Activated CD4-positive, alpha-beta T cell treated with anti-CD3 and anti-CD28 coated beads, Interleukin-2, amount 10 ng/mL, durations not matched to agents 7 days and 5 days (primary cell): ENCODE measurements at regions of chr3 and their contacts with region 1.

Region 1: DNA sequence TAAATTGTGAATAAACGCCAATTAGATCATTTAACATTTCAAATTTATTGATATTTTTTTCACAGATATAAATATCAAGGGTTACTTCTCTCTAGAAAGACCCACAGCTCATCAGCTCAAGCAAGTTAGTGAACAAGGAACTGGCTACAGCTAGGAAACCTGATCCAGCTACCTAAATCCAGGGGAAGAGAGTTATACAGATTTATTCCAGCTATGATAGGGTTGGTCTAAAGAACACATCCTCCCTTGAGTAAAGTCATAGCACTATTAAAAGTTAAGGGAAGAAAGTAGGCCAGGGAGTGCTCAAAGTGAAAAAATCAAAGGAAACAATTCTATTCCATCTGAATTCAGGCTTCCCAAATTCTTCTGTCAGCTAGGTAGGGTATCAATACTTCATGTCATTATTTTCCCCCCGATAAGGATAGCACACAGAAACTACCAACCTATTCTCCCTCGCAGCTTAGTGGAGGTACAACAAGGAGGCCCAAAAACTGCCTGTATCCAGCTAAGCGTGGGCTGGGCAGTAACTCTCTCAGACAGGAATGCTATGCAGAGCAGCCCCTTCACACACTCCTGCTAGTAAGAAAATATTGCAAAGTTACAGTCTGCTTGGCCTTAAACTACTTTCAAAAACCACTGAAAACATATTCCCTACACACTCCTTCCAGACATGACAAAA is 44.0 kb downstream of the DCUN1D1 start:
- DNase-seq: no peak
- H3K4me3 Mint-ChIP-seq: no peak overlapping the region
- H3K27ac Mint-ChIP-seq: no peak overlapping the region
- H3K4me1 Mint-ChIP-seq: peaks cover 13% of the 10 kb centered on the region
- H3K27me3 Mint-ChIP-seq: no peaks in the 10 kb centered on the region

Region 2: DNA sequence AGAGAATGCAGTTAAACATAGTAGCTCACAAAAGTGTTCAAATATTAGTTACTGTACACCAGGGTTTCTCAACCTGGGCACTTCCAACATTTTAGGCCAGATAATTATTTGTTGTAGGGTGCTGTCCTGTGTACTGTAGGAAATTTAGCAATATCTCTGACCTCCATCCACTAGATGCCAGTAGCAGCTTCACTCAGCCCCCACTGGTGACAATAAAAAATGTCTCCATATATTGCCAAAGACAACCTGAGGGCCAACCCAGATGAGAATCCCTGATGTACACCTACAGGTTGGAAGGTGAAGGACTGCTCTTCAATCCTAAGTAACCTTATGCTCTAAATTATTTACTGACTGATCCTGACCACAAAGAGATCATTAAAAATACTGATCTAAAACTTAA is 11.5 kb after region 1 on chr3:
- CTCF ChIA-PET with region 1: interaction called, 4 read pairs
- POLR2A ChIA-PET with region 1: interaction called, 10 read pairs
- DNase-seq: no peak
- H3K4me3 Mint-ChIP-seq: no peak overlapping the region
- H3K27ac Mint-ChIP-seq: no peak overlapping the region
- H3K4me1 Mint-ChIP-seq: no peaks in the 10 kb centered on the region
- H3K27me3 Mint-ChIP-seq: no peaks in the 10 kb centered on the region